PC-3 (cell line): ENCODE measurements at regions of chr11 and their contacts with region 1.

Region 1: GRCh38 chr11:73597956-73598718 is at the start of gene FAM168A:
- DNase-seq: peak; percentile 97
- ATAC-seq: peak; percentile 95
- H3K4me3 ChIP-seq: peak within 1 kb of the TSS; percentile 81
- H3K27ac ChIP-seq: peak within 1 kb of the TSS; percentile 23; the same call in 1 of the 2 replicates
- H3K4me1 ChIP-seq: peaks cover 21% of the 10 kb centered on the region
- H3K27me3 ChIP-seq: no peaks in the 10 kb centered on the region
- CTCF ChIP-seq: no peak
- total RNA-seq, gene FAM168A: 24.5 and 27.8 TPM in 2 replicates

Region 2: DNA sequence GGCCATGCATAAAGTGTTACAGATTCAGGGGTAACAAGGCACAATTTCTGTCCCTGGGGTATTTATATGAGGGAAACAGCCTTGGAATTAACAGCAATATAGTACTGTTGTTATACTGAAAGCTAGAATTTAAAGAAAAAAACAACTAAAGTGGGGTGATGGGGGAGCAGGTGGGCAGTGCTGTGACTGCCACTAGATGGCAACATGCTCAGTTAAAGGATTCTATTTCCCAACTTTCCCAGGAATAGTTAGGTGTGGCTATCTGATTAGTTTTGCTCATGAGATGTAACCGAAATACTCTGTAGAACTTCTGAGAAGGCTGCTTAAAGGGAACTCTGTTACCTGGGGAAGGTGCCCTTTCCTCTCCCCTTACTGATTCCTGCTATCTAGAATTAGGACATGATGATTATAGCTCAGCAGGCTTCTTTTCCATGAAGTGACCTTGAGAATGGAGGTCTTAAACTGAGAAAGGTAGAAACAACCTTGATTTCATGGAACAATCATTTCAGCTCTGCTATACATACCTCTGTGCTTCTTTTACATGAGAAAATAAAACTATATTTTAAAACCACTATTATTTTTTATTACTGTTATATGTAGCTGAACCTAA is 119.3 kb before region 1 on chr11:
- CTCF ChIA-PET with region 1: no interaction called
- POLR2A ChIA-PET with region 1: no interaction called
- intact Hi-C with region 1: loop called (anchors 5 kb)
- DNase-seq: peak; percentile 74
- ATAC-seq: peak; percentile 96
- H3K4me3 ChIP-seq: no peak overlapping the region
- H3K27ac ChIP-seq: no peak overlapping the region
- H3K4me1 ChIP-seq: peaks cover 4% of the 10 kb centered on the region; the same call in 1 of the 2 replicates
- H3K27me3 ChIP-seq: no peaks in the 10 kb centered on the region
- CTCF ChIP-seq: peak; percentile 98